Endothelial cell of umbilical vein (primary cell): ENCODE measurements at regions of chr10 and their contacts with region 1.

Region 1: DNA sequence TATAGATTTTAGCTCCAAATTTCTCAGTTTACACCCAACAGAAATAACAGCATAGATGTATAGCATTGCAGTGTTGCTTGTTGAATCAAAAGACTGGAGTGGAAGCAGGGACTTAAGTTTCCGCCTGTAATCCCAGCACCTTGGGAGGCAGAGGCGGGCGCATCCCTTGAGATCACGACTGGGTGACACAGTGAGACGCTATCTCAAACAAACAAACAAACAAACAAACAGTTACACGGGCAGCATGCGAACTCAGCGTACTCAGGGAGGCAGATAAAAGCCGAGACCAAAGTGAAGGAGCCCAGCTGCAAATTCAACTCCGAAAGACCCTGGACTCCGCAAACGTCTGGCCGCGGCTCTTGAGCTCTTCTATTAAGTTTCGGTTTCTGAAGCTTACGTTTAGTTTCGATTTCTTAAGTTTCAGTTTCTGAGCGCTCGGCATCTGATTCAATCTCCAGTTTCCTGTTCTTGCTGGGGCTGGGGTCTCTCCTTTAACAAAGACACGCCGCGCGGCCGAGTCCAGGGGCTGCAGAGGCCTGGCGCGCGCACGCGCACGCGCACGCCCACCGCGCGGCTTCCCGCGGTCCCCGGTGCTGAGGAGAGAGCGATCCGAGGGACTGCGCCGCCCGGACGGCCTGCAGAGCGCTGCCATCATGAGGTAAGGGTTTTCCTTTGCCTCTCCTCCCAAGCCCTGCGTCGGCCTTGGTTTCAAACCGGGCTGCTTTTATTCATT is at the start of gene IFIT5:
- DNase-seq: peak; percentile 80
- H3K4me3 ChIP-seq: peak within 1 kb of the TSS; percentile 65 to 89 (median 76)
- H3K27ac ChIP-seq: no peak within 1 kb of the TSS
- H3K4me1 ChIP-seq: no peaks in the 10 kb centered on the region
- H3K27me3 ChIP-seq: no peaks in the 10 kb centered on the region
- CTCF ChIP-seq: no peak
- POLR2A ChIP-seq: peak; percentile 49
- total RNA-seq, gene IFIT5: 3.2 and 4.0 TPM in 2 replicates

Region 2: GRCh38 chr10:89042562-89042961 is 371.8 kb before region 1 on chr10:
- CTCF ChIA-PET with region 1: no interaction called
- POLR2A ChIA-PET with region 1: no interaction called
- dilution Hi-C with region 1: no loop called
- intact Hi-C with region 1: no loop called
- DNase-seq: no peak
- H3K4me3 ChIP-seq: no peak overlapping the region
- H3K27ac ChIP-seq: no peak overlapping the region
- H3K4me1 ChIP-seq: no peaks in the 10 kb centered on the region
- H3K27me3 ChIP-seq: no peaks in the 10 kb centered on the region
- CTCF ChIP-seq: no peak
- POLR2A ChIP-seq: no peak

Region 3: DNA sequence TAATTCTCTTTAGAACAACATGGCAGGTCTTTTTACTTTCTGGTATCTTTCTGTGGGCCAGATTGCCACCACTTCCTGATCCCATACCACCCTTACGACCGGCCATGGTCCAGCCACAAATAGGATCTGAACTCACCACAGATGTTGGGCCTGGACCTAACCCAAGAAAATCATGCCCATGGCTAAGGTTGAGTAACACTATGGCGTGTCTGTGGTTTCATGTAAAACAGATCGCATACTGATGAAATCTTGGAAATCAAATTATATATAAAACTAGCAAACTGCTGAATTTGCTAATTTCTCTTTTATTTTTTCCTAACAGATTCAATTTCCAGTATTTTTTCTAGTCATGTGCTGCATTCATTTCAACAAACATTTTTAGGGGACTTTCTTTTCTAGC is 284.4 kb before region 1 on chr10:
- CTCF ChIA-PET with region 1: no interaction called
- POLR2A ChIA-PET with region 1: no interaction called
- dilution Hi-C with region 1: no loop called
- intact Hi-C with region 1: no loop called
- DNase-seq: no peak
- H3K4me3 ChIP-seq: no peak overlapping the region
- H3K27ac ChIP-seq: no peak overlapping the region
- H3K4me1 ChIP-seq: no peaks in the 10 kb centered on the region
- H3K27me3 ChIP-seq: no peaks in the 10 kb centered on the region
- CTCF ChIP-seq: no peak
- POLR2A ChIP-seq: no peak

Region 4: GRCh38 chr10:89278034-89278535 is 136.2 kb before region 1 on chr10:
- CTCF ChIA-PET with region 1: no interaction called
- POLR2A ChIA-PET with region 1: no interaction called
- dilution Hi-C with region 1: no loop called
- intact Hi-C with region 1: loop called (anchors 1 kb)
- DNase-seq: peak; percentile 98
- H3K4me3 ChIP-seq: peak overlapping the region in 1 of 3 experiments; percentile 12
- H3K27ac ChIP-seq: peak overlapping the region; percentile 49
- H3K4me1 ChIP-seq: peaks cover 38% of the 10 kb centered on the region
- H3K27me3 ChIP-seq: peaks cover 38 to 72% of the 10 kb centered on the region in 2 experiments
- CTCF ChIP-seq: no peak
- POLR2A ChIP-seq: no peak

Region 5: DNA sequence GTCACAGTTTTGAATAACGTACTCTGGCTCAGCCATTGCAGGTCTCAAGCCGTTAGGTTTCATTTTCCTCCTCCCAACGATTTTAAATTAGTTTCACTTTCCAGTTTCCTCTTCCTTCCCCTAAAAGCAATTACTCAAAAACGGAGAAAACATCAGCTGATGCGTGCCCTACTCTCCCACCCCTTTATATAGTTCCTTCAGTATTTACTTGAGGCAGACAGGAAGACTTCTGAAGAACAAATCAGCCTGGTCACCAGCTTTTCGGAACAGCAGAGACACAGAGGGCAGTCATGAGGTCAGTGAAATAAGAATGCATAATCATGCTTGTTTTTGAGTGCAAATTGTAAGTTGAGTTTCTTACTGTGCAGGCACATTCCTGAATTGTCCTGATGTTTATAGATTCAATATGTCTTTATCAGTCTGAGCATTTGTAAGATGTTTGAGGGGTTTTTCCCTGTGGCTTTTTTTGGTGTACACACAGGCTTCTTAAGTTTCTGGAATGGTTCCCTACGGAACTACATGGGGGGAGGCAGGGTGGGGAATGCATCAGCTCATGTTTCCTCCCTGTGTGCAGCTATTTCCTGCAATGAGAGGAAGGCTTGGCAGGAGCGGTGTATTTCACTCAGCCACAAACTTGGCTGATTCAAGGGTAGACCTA is 86.4 kb before region 1 on chr10 and contains the start of gene IFIT3:
- CTCF ChIA-PET with region 1: no interaction called
- POLR2A ChIA-PET with region 1: no interaction called
- dilution Hi-C with region 1: no loop called
- intact Hi-C with region 1: loop called (anchors 2 kb)
- DNase-seq: peak; percentile 95
- H3K4me3 ChIP-seq: peak within 1 kb of the TSS; percentile 24 to 80 (median 39)
- H3K27ac ChIP-seq: peak within 1 kb of the TSS; percentile 88
- H3K4me1 ChIP-seq: peaks cover 21% of the 10 kb centered on the region
- H3K27me3 ChIP-seq: no peaks in the 10 kb centered on the region
- CTCF ChIP-seq: no peak
- POLR2A ChIP-seq: peak; percentile 19
- total RNA-seq, gene IFIT3: 2.6 and 3.1 TPM in 2 replicates

Region 6: DNA sequence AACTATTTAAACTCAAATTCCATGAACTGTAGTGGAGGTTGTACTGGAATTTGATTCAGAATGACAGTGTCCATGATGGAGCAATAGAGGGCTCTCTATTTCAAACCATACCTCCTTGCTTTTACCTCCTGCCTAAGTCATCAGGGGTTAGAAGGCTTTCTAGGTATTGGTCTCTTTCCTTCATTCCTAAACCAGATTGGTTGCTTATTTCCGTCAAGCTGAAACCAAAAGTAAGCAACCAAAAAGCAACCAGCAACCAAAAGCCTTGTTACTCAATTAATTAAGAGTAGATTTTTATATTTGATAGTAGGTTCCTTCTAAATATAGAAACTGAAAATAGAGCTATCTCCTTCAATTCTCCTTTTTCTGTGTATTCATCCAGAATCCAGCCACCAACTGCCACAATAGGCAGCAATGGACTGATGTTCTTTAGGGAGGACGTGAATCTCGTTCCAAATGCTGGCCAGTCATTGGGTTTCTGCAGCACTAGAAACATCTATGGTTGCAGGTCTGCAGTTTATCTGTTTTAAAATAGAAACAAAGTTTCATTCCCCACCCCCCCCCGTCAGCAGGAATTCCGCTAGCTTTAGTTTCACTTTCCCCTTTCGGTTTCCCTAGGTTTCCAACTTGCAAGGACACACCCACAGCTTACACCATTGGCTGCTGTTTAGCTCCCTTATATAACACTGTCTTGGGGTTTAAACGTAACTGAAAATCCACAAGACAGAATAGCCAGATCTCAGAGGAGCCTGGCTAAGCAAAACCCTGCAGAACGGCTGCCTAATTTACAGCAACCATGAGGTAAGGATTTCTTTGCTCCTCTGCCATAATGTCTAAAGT is 22.2 kb before region 1 on chr10 and contains the start of gene IFIT1:
- CTCF ChIA-PET with region 1: interaction called, 6 read pairs
- POLR2A ChIA-PET with region 1: interaction called, 3 read pairs
- dilution Hi-C with region 1: no loop called
- intact Hi-C with region 1: loop called (anchors 1 kb)
- DNase-seq: peak; percentile 76
- H3K4me3 ChIP-seq: peak within 1 kb of the TSS; percentile 52 to 100 (median 98)
- H3K27ac ChIP-seq: peak within 1 kb of the TSS; percentile 63
- H3K4me1 ChIP-seq: peaks cover 10% of the 10 kb centered on the region
- H3K27me3 ChIP-seq: no peaks in the 10 kb centered on the region
- CTCF ChIP-seq: no peak
- POLR2A ChIP-seq: no peak
- total RNA-seq, gene IFIT1: 0.39 and 0.75 TPM in 2 replicates

Region 7: DNA sequence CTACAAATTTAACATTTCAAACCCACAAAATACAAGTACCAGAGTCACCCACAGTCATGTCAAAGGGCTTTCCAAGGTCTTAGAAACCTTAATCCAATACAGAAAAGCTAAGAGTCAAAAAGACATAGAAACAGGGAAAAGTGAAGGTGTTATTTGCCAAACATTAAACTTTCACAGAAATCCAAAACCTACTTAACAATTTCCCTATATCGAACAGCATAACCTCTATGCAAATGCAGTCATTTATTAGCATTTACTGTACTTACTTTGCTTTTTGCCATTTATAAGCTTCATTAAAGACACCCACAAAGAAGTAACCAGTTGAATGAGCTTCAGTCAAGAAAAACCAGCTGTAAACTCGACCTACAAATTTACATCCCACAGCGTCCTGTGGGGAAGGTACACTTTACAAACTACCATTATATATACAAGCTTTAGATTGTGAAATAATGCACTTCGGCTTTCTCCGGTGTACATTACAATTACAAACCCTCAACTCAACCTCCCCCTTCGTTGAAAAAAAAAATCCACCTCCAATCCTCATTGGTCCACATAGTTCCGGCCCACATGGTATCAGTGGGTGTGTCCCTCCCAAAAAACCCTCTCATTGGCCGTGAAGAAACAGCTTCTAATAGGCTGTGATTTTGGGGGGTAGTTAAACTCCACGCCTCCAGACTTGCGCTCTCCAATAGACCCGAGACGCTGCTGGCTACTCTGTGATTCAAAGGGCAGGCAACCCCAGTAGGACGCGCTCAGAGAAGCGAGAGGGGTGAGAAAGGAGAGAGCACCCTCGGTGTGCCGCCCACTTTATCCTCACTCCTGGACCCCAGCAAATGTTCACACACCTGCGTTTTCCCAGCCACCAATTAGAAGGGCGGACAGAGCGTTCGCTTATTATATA is 229.4 kb after region 1 on chr10:
- CTCF ChIA-PET with region 1: no interaction called
- POLR2A ChIA-PET with region 1: no interaction called
- dilution Hi-C with region 1: no loop called
- intact Hi-C with region 1: loop called (anchors 2 kb)
- DNase-seq: peak; percentile 92
- H3K4me3 ChIP-seq: peak overlapping the region; percentile 23 to 62 (median 61)
- H3K27ac ChIP-seq: peak overlapping the region; percentile 2
- H3K4me1 ChIP-seq: peaks cover 12% of the 10 kb centered on the region
- H3K27me3 ChIP-seq: no peaks in the 10 kb centered on the region
- CTCF ChIP-seq: no peak
- POLR2A ChIP-seq: peak; percentile 75